ENCODE measurements at regions of chr17 and their contacts with region 1.

Region 1: DNA sequence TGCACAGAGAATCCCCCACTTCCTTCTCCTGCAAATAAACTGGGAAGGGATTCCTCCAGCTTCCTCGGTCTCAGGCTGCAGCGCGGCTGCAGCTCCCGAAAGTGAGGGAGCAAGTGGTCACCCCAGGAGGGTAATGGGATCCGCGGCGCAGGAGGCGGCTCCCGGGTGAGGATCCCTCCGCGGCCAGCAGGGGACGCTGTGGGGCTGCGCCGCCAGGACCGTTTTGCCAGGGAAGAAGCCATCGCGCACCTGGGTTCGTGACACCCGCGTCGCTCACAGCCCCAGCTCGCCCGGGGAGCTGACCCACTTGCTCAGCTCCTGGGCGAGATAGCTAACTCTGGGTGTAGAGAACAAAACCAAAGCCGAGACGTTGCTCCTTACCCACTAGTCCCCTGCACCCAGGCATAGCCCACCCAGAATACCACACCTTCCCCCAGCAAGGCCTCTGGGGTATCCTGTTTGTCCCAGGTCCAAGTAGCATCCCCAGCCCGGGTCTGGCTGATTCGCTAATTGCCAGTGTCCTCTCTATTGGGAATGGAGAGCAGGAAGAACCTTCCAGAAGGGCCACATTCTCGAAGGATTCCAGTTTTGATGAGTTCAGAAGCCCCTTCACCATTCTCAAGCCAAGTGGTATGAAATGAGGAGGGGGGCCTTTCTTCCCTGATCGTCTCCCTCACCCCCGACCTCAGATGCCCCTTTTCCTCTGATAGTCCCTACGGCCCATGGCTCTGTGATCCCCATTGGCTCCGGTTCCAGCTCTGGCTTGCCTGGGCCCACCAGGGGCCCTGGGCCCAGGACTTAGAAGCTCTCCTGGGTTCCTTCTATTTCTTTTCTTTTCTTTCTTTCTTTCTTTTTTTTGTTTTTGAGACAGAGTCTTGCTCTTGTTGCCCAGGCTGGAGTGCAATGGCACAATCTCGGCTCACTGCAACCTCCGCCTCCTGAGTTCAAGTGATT is 14.1 kb downstream of the CYGB start:
- DNase-seq: peak; percentile 89
- ATAC-seq: peak; percentile 89
- H3K4me3 Mint-ChIP-seq: no peak overlapping the region
- H3K27ac Mint-ChIP-seq: no peak overlapping the region
- H3K4me1 Mint-ChIP-seq: peaks cover 13% of the 10 kb centered on the region
- H3K27me3 Mint-ChIP-seq: no peaks in the 10 kb centered on the region

Region 2: GRCh38 chr17:76547184-76547641 is 23.9 kb after region 1 on chr17:
- CTCF ChIA-PET with region 1: interaction called, 16 read pairs
- POLR2A ChIA-PET with region 1: interaction called, 3 read pairs
- intact Hi-C with region 1: loop called (anchors 1 kb)
- DNase-seq: peak; percentile 70
- ATAC-seq: peak; percentile 81
- H3K4me3 Mint-ChIP-seq: no peak overlapping the region
- H3K27ac Mint-ChIP-seq: no peak overlapping the region
- H3K4me1 Mint-ChIP-seq: peaks cover 4% of the 10 kb centered on the region
- H3K27me3 Mint-ChIP-seq: peaks cover 10% of the 10 kb centered on the region

Region 3: GRCh38 chr17:76585818-76586593 is 62.6 kb after region 1 on chr17 and contains the start of gene ST6GALNAC2:
- CTCF ChIA-PET with region 1: interaction called, 5 read pairs
- POLR2A ChIA-PET with region 1: no interaction called
- intact Hi-C with region 1: loop called (anchors 2 to 10 kb)
- DNase-seq: peak; percentile 64
- ATAC-seq: peak; percentile 71
- H3K4me3 Mint-ChIP-seq: peak within 1 kb of the TSS; percentile 52
- H3K27ac Mint-ChIP-seq: no peak within 1 kb of the TSS
- H3K4me1 Mint-ChIP-seq: peaks cover 6% of the 10 kb centered on the region
- H3K27me3 Mint-ChIP-seq: peaks cover 37% of the 10 kb centered on the region
- total RNA-seq, gene ST6GALNAC2: 0.32 TPM in 1 of 2 experiments, not detected in the other

Region 4: GRCh38 chr17:76681222-76682137 is 158.1 kb after region 1 on chr17:
- CTCF ChIA-PET with region 1: interaction called, 26 read pairs
- POLR2A ChIA-PET with region 1: no interaction called
- intact Hi-C with region 1: loop called (anchors 1 to 10 kb)
- DNase-seq: peak; percentile 83
- ATAC-seq: peak; percentile 89
- H3K4me3 Mint-ChIP-seq: no peak overlapping the region
- H3K27ac Mint-ChIP-seq: no peak overlapping the region
- H3K4me1 Mint-ChIP-seq: peaks cover 1% of the 10 kb centered on the region
- H3K27me3 Mint-ChIP-seq: no peaks in the 10 kb centered on the region